ENCODE measurements at regions of chr7 and their contacts with region 1.

Region 1: DNA sequence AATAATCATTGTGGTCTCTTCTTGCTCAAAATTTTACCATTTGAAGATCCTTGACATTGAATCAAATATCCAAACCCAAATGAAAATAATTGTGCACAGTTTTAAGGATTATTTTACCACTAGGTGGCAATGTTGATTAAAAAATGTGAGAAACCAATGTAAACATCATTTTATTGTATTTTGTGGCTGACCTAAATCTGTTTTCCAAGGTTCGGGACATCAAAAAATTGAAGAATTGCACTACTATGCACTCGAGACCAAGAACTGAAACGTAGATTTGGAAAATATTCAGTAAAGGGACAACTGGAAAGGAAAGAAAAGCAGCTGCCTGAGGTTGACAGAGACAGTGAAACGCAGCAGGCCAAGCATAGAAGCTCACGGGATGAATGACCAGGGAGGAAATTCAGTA is 259.3 kb downstream of the SNX13 start:
- DNase-seq: peak in 3 of 14 experiments; percentile 31 to 45 (median 37)
- ATAC-seq: no peak
- H3K4me3 ChIP-seq: no peak overlapping the region
- H3K4me3 Mint-ChIP-seq: no peak overlapping the region
- H3K27ac ChIP-seq: no peak overlapping the region
- H3K27ac Mint-ChIP-seq: no peak overlapping the region
- H3K4me1 ChIP-seq: no peaks in the 10 kb centered on the region
- H3K4me1 Mint-ChIP-seq: no peaks in the 10 kb centered on the region
- H3K27me3 ChIP-seq: no peaks in the 10 kb centered on the region
- H3K27me3 Mint-ChIP-seq: no peaks in the 10 kb centered on the region
- CTCF ChIP-seq: peak; percentile 72

Region 2: DNA sequence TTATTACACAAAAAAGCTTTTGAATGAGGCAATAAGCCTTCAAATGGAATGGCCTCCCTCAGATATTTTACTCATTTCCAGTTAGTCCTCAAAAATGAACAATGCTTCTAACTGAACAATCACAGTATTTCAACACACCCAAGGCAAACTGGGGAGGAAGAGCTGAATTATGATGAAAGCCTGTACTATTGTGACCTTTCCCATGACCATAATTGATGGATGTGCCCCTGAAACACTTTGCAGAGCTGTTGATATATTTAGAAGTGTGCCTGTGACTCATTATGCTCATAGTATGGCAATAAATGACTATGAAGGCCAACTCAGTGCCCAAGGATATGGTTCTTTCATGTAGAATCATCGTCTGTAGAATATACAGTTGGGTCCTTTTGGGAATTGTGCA is 134.3 kb before region 1 on chr7:
- CTCF ChIA-PET with region 1: no interaction called
- POLR2A ChIA-PET with region 1: no interaction called
- intact Hi-C with region 1: no loop called
- DNase-seq: peak in 1 of 14 experiments; percentile 31
- ATAC-seq: no peak
- H3K4me3 ChIP-seq: no peak overlapping the region
- H3K4me3 Mint-ChIP-seq: no peak overlapping the region
- H3K27ac ChIP-seq: no peak overlapping the region
- H3K27ac Mint-ChIP-seq: no peak overlapping the region
- H3K4me1 ChIP-seq: no peaks in the 10 kb centered on the region
- H3K4me1 Mint-ChIP-seq: no peaks in the 10 kb centered on the region
- H3K27me3 ChIP-seq: no peaks in the 10 kb centered on the region
- H3K27me3 Mint-ChIP-seq: no peaks in the 10 kb centered on the region
- CTCF ChIP-seq: no peak

Region 3: DNA sequence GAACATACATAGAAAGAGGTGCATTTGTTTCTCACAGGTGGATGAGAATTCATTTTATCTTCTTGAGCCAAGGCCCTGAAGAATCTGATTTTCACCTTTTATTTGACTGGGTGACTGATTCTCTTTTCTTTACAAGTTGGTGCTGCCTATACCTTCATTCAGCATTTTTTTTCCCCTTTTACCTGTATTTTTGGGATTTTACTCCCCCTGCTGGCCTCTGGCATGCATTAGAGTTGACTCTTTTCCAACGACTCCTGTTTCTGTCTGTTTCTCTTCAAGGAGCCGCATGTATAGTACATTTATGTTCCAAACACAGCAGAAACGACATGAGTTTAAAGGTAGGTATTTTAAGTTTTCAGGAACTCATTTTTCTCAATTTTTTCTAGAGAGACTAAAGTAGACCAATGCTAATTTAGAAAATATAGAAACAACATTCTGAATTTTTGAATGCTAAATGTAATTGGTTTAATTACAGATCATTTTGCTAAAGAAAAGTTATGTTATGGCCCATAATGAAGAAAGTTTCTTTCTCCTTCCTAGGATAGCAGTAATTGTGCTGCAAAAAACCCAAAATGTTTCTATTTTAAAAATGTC is 664.8 kb after region 1 on chr7:
- CTCF ChIA-PET with region 1: no interaction called
- POLR2A ChIA-PET with region 1: no interaction called
- intact Hi-C with region 1: loop called (anchors 2 to 5 kb)
- DNase-seq: peak in 5 of 14 experiments; percentile 1 to 59 (median 43)
- ATAC-seq: peak; percentile 34
- H3K4me3 ChIP-seq: no peak overlapping the region
- H3K4me3 Mint-ChIP-seq: no peak overlapping the region
- H3K27ac ChIP-seq: no peak overlapping the region
- H3K27ac Mint-ChIP-seq: no peak overlapping the region
- H3K4me1 ChIP-seq: no peaks in the 10 kb centered on the region
- H3K4me1 Mint-ChIP-seq: no peaks in the 10 kb centered on the region
- H3K27me3 ChIP-seq: no peaks in the 10 kb centered on the region
- H3K27me3 Mint-ChIP-seq: peaks cover 10% of the 10 kb centered on the region
- CTCF ChIP-seq: peak; percentile 63

Region 4: GRCh38 chr7:18666107-18666728 is 985.3 kb after region 1 on chr7:
- CTCF ChIA-PET with region 1: no interaction called
- POLR2A ChIA-PET with region 1: no interaction called
- intact Hi-C with region 1: loop called (anchors 5 to 10 kb)
- DNase-seq: peak; percentile 9 to 76 (median 34)
- ATAC-seq: peak; percentile 44
- H3K4me3 ChIP-seq: no peak overlapping the region
- H3K4me3 Mint-ChIP-seq: no peak overlapping the region
- H3K27ac ChIP-seq: no peak overlapping the region
- H3K27ac Mint-ChIP-seq: no peak overlapping the region
- H3K4me1 ChIP-seq: no peaks in the 10 kb centered on the region
- H3K4me1 Mint-ChIP-seq: no peaks in the 10 kb centered on the region
- H3K27me3 ChIP-seq: no peaks in the 10 kb centered on the region
- H3K27me3 Mint-ChIP-seq: no peaks in the 10 kb centered on the region
- CTCF ChIP-seq: peak; percentile 76

Region 5: GRCh38 chr7:19051767-19052375 is 1370.9 kb after region 1 on chr7:
- CTCF ChIA-PET with region 1: no interaction called
- POLR2A ChIA-PET with region 1: no interaction called
- intact Hi-C with region 1: loop called in 1 of 2 experiments (anchors 5 kb)
- DNase-seq: peak in 5 of 14 experiments; percentile 2 to 31 (median 26)
- ATAC-seq: no peak
- H3K4me3 ChIP-seq: no peak overlapping the region
- H3K4me3 Mint-ChIP-seq: no peak overlapping the region
- H3K27ac ChIP-seq: no peak overlapping the region
- H3K27ac Mint-ChIP-seq: no peak overlapping the region
- H3K4me1 ChIP-seq: no peaks in the 10 kb centered on the region
- H3K4me1 Mint-ChIP-seq: no peaks in the 10 kb centered on the region
- H3K27me3 ChIP-seq: no peaks in the 10 kb centered on the region
- H3K27me3 Mint-ChIP-seq: no peaks in the 10 kb centered on the region
- CTCF ChIP-seq: peak; percentile 70

Region 6: DNA sequence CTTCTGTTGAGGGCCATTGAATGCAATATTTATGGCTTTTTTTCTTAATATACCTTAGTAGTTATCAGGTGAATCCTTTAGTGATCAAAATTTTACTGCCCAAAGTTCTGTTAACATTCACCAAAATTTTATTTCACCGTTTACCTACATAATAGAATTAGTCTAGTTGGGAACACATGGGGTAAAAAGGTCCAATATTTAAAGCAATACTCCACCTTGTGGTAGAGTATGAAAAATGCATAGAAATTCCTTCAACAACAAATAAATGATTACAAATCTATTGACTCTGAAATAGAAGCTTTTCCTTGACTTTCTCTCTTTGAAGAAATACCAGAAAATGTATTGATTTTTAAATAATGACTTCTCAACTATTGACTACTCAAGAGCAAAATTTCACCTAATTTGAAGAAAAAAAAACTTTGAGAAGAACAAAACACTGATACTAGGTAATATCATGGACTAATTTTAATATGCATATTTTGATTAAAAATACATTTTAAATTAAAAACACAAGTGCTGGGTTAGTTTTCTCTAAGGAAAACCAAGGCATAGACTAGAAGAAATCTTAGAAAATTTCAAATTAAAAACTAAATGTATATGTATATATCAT is 1984.6 kb after region 1 on chr7:
- CTCF ChIA-PET with region 1: no interaction called
- POLR2A ChIA-PET with region 1: no interaction called
- intact Hi-C with region 1: loop called in 1 of 2 experiments (anchors 1 kb)
- DNase-seq: peak in 3 of 14 experiments; percentile 13 to 28 (median 26)
- ATAC-seq: no peak
- H3K4me3 ChIP-seq: no peak overlapping the region
- H3K4me3 Mint-ChIP-seq: no peak overlapping the region
- H3K27ac ChIP-seq: no peak overlapping the region
- H3K27ac Mint-ChIP-seq: no peak overlapping the region
- H3K4me1 ChIP-seq: no peaks in the 10 kb centered on the region
- H3K4me1 Mint-ChIP-seq: peaks cover 11% of the 10 kb centered on the region
- H3K27me3 ChIP-seq: no peaks in the 10 kb centered on the region
- H3K27me3 Mint-ChIP-seq: no peaks in the 10 kb centered on the region
- CTCF ChIP-seq: peak; percentile 72